ENCODE measurements at regions of chr10 and their contacts with region 1.

Region 1: DNA sequence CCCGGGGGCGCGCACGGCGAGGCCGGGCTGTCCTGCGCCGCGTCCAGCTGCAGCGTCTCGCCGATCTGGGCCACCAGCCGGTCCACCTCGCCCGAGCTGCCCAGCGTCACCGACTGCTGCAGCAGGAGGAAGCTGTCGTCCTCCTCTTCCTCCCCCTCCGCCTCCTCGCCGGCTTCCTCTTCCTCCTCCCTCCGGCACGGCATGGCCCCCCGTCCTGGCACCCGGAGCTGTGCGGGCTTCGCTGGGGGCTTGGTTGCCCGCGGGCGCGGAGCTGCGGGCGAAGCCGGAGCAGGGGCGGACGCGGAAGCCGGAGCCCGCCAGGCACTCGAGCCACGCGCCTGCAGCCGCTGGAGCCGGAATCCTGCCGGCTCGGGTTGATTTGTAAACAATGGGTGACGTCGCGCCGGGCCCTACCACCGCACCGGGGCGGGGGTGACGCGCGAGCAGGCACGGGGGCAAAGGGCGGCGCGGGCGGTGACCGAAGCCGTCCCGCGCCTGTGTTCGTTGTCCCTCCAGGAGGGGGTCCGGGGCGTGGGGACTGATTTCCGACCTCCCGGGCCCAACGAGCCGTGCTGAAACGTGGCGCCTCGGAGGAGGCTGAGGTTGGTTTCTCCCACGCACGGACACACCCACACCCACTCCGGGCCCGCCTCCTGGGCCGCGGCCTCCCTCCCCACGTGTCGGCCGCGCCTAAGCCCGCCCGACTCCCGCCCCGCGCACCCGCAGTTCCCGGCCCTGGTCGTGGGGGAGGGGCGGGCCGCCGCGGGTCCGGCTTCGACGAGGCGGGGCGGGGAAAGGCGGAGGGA is at the start of gene FRAT2:
- DNase-seq: peak; percentile 89
- H3K4me3 Mint-ChIP-seq: peak within 1 kb of the TSS; percentile 93
- H3K27ac Mint-ChIP-seq: peak within 1 kb of the TSS; percentile 98
- H3K4me1 Mint-ChIP-seq: peaks cover 30% of the 10 kb centered on the region
- H3K27me3 Mint-ChIP-seq: no peaks in the 10 kb centered on the region
- CTCF ChIP-seq: no peak
- total RNA-seq, gene FRAT2: 9.0 and 11.4 TPM in 2 replicates

Region 2: GRCh38 chr10:96556003-96556402 is 778.6 kb before region 1 on chr10:
- CTCF ChIA-PET with region 1: no interaction called
- POLR2A ChIA-PET with region 1: no interaction called
- intact Hi-C with region 1: no loop called
- DNase-seq: peak; percentile 16
- H3K4me3 Mint-ChIP-seq: no peak overlapping the region
- H3K27ac Mint-ChIP-seq: no peak overlapping the region
- H3K4me1 Mint-ChIP-seq: peaks cover 3% of the 10 kb centered on the region
- H3K27me3 Mint-ChIP-seq: no peaks in the 10 kb centered on the region
- CTCF ChIP-seq: peak; percentile 26

Region 3: DNA sequence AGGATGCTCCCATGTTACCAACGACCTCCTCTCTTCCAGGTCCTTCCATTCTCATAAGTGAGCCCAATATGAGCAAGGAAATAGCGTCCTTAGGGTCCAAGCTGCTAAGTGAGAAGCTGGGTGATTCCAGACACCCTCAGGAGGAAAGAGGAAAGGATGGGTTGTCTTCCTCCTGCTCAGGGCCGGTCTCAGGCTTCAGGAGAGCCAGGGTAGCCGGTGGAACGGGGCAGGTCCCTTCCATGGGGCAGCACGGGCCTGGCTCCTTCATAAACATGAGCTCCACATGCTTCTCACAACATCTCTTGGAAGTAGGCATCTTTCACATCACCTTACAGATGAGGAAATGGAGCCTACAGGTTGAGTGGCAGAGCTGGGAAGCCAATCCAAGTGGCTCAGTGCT is 161.5 kb before region 1 on chr10:
- CTCF ChIA-PET with region 1: no interaction called
- POLR2A ChIA-PET with region 1: no interaction called
- intact Hi-C with region 1: no loop called
- DNase-seq: no peak
- H3K4me3 Mint-ChIP-seq: no peak overlapping the region
- H3K27ac Mint-ChIP-seq: no peak overlapping the region
- H3K4me1 Mint-ChIP-seq: no peaks in the 10 kb centered on the region
- H3K27me3 Mint-ChIP-seq: peaks cover 35% of the 10 kb centered on the region
- CTCF ChIP-seq: no peak

Region 4: DNA sequence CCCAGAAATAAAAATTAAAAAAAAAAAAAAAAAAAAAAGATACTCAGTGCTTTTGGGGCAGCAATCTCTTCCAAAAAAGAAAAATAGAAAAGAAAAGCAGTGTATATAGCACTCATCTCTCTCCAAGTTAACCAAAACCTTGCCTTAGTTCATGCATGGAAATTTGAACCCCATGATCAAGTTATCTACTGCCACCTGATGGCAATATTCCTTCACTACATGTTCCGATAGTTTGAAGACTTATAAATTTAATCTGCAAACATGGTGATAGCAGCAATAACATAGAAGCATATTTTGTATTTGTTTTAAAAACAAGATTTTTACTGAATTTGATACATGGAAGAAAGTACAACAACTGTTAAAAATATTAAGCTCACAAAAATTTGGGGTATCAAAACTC is 100.2 kb before region 1 on chr10:
- CTCF ChIA-PET with region 1: interaction called, 12 read pairs
- POLR2A ChIA-PET with region 1: no interaction called
- intact Hi-C with region 1: no loop called
- DNase-seq: peak; percentile 47
- H3K4me3 Mint-ChIP-seq: no peak overlapping the region
- H3K27ac Mint-ChIP-seq: no peak overlapping the region
- H3K4me1 Mint-ChIP-seq: no peaks in the 10 kb centered on the region
- H3K27me3 Mint-ChIP-seq: no peaks in the 10 kb centered on the region
- CTCF ChIP-seq: peak; percentile 57

Region 5: DNA sequence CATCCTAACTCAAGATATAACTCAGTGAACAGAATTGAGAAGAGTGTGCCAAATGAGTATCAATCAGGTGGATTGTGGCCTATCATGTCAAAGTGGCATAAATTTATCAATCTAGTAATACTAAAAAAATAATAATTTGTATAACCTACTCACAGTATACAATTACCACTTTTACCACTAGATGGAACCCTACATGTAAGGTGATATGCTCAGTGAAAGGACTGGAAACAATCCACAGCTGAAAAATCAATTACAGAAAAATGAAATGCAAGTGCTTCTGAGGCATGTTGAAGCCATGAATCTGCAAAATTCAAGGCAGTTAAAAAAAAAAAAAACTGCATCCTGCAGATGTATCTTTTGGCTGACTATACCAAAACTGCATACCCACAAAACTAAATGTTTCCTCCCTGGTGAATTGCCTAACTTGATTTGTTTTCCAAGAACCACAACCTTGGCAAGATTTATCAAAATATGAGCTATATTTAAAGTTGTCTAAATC is 56.0 kb before region 1 on chr10:
- CTCF ChIA-PET with region 1: interaction called, 55 read pairs
- POLR2A ChIA-PET with region 1: interaction called, 87 read pairs
- intact Hi-C with region 1: loop called (anchors 2 kb)
- DNase-seq: peak; percentile 84
- H3K4me3 Mint-ChIP-seq: no peak overlapping the region
- H3K27ac Mint-ChIP-seq: peak overlapping the region; percentile 89
- H3K4me1 Mint-ChIP-seq: peaks cover 17% of the 10 kb centered on the region
- H3K27me3 Mint-ChIP-seq: no peaks in the 10 kb centered on the region
- CTCF ChIP-seq: peak; percentile 37

Region 6: GRCh38 chr10:97318772-97319651 is 15.6 kb before region 1 on chr10 and contains the start of gene FRAT1:
- CTCF ChIA-PET with region 1: interaction called, 31 read pairs
- POLR2A ChIA-PET with region 1: interaction called, 158 read pairs
- intact Hi-C with region 1: loop called (anchors 2 kb)
- DNase-seq: peak; percentile 87
- H3K4me3 Mint-ChIP-seq: peak within 1 kb of the TSS; percentile 80
- H3K27ac Mint-ChIP-seq: peak within 1 kb of the TSS; percentile 99
- H3K4me1 Mint-ChIP-seq: peaks cover 8% of the 10 kb centered on the region
- H3K27me3 Mint-ChIP-seq: no peaks in the 10 kb centered on the region
- CTCF ChIP-seq: no peak
- total RNA-seq, gene FRAT1: 1.9 and 2.1 TPM in 2 replicates

Region 7: GRCh38 chr10:97407211-97407951 is 72.8 kb after region 1 on chr10:
- CTCF ChIA-PET with region 1: no interaction called
- POLR2A ChIA-PET with region 1: interaction called, 14 read pairs
- intact Hi-C with region 1: no loop called
- DNase-seq: peak; percentile 85
- H3K4me3 Mint-ChIP-seq: no peak overlapping the region
- H3K27ac Mint-ChIP-seq: no peak overlapping the region
- H3K4me1 Mint-ChIP-seq: no peaks in the 10 kb centered on the region
- H3K27me3 Mint-ChIP-seq: no peaks in the 10 kb centered on the region
- CTCF ChIP-seq: peak; percentile 76

Measured in MCF 10A (cell line).